ENCODE measurements at regions of chr3 and their contacts with region 1.

Region 1: GRCh38 chr3:94115482-94115881 is 52.6 kb downstream of the NSUN3 start:
- DNase-seq: peak; percentile 44
- H3K4me3 Mint-ChIP-seq: no peak overlapping the region
- H3K27ac Mint-ChIP-seq: no peak overlapping the region
- H3K4me1 Mint-ChIP-seq: no peaks in the 10 kb centered on the region
- H3K27me3 Mint-ChIP-seq: no peaks in the 10 kb centered on the region
- CTCF ChIP-seq: peak; percentile 54

Region 2: DNA sequence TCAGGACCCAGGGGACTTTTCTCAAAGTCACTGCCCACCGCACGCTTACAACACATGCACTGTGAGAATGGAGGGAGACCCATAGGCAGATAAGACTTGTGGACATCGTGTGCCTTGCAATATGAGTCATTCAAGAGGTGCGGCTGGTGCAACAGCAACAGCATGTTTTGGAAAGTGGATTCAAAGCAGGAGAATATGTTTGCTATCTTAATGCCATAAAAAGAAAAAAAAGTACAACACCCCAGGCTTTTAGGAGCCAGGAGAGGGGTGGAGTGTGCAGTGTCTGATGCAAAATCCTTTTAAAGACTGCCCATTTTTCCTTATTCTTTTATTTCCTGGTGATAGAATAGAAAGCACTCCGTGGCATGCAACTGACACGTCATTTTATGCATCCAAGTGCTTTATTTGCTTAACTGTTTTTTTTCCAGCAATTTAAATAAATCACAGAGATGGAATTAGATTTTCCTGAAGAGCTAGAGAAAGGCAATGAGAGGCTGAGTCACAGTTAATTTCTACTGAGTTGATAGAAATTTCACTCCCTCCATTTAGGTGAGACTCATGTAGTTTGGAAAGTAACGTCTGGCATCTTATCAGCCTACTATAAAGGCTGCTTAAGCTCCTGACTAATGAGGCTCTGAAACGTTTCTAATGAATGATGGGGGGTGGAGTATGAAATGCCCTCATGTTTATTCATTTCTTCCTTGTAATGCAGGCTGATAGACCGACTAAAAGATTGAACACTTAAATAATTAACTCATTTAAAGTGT is 43.8 kb after region 1 on chr3:
- CTCF ChIA-PET with region 1: no interaction called
- POLR2A ChIA-PET with region 1: no interaction called
- intact Hi-C with region 1: loop called (anchors 2 kb)
- DNase-seq: peak; percentile 85
- H3K4me3 Mint-ChIP-seq: peak overlapping the region; percentile 65
- H3K27ac Mint-ChIP-seq: peak overlapping the region; percentile 87
- H3K4me1 Mint-ChIP-seq: peaks cover 27% of the 10 kb centered on the region
- H3K27me3 Mint-ChIP-seq: no peaks in the 10 kb centered on the region
- CTCF ChIP-seq: no peak

Region 3: GRCh38 chr3:94285870-94286269 is 170.4 kb after region 1 on chr3:
- CTCF ChIA-PET with region 1: interaction called, 10 read pairs
- POLR2A ChIA-PET with region 1: no interaction called
- intact Hi-C with region 1: loop called (anchors 1 kb)
- DNase-seq: peak; percentile 42
- H3K4me3 Mint-ChIP-seq: no peak overlapping the region
- H3K27ac Mint-ChIP-seq: no peak overlapping the region
- H3K4me1 Mint-ChIP-seq: no peaks in the 10 kb centered on the region
- H3K27me3 Mint-ChIP-seq: no peaks in the 10 kb centered on the region
- CTCF ChIP-seq: peak; percentile 42